ENCODE measurements at regions of chr17 and their contacts with region 1.

Region 1: GRCh38 chr17:50094753-50095619 is at the start of gene PDK2:
- DNase-seq: peak; percentile 95
- H3K4me3 Mint-ChIP-seq: peak within 1 kb of the TSS; percentile 82
- H3K27ac Mint-ChIP-seq: peak within 1 kb of the TSS; percentile 90
- H3K4me1 Mint-ChIP-seq: peaks cover 16% of the 10 kb centered on the region
- H3K27me3 Mint-ChIP-seq: no peaks in the 10 kb centered on the region
- total RNA-seq, gene PDK2: 10.5 to 11.1 TPM

Region 2: DNA sequence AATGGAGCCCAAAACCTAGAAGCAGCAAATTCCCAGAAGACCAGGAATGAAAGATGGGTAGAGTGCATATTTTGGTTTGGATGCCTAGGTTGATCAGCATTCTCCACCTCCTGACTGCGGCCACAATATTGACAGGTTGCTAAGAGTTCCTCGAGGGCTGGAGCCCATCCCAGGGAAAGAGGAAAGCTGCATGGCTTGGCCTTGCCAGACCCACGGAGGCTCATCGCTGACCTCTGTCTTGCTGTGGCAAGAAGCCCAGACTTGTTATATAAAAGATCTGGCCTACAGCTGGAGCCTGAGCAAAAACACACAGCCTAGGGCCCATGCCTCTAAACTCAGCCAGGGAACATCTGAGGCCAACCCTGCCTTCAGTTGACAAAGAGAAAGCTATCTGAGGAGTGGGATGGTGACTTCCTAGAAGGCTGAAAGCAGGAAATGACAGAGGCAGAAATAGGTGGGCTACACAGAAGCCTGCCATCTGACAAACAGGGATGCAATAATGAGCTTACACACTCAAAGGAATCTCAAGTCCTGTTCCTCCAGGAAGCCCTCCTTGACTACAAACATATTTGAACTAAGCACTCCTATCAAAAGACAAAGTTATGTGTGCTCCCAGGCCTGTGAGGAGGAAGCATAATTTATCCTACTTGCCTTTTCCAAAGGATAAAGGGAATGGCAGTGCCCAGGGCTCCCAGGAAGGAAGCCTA is 364.8 kb before region 1 on chr17:
- CTCF ChIA-PET with region 1: no interaction called
- intact Hi-C with region 1: no loop called
- DNase-seq: no peak
- H3K4me3 Mint-ChIP-seq: no peak overlapping the region
- H3K27ac Mint-ChIP-seq: no peak overlapping the region
- H3K4me1 Mint-ChIP-seq: peaks cover 51% of the 10 kb centered on the region
- H3K27me3 Mint-ChIP-seq: no peaks in the 10 kb centered on the region

Region 3: GRCh38 chr17:50045154-50045553 is 49.8 kb before region 1 on chr17:
- CTCF ChIA-PET with region 1: interaction called, 12 read pairs
- intact Hi-C with region 1: no loop called
- DNase-seq: no peak
- H3K4me3 Mint-ChIP-seq: no peak overlapping the region
- H3K27ac Mint-ChIP-seq: no peak overlapping the region
- H3K4me1 Mint-ChIP-seq: peaks cover 21% of the 10 kb centered on the region
- H3K27me3 Mint-ChIP-seq: peaks cover 2% of the 10 kb centered on the region

Region 4: DNA sequence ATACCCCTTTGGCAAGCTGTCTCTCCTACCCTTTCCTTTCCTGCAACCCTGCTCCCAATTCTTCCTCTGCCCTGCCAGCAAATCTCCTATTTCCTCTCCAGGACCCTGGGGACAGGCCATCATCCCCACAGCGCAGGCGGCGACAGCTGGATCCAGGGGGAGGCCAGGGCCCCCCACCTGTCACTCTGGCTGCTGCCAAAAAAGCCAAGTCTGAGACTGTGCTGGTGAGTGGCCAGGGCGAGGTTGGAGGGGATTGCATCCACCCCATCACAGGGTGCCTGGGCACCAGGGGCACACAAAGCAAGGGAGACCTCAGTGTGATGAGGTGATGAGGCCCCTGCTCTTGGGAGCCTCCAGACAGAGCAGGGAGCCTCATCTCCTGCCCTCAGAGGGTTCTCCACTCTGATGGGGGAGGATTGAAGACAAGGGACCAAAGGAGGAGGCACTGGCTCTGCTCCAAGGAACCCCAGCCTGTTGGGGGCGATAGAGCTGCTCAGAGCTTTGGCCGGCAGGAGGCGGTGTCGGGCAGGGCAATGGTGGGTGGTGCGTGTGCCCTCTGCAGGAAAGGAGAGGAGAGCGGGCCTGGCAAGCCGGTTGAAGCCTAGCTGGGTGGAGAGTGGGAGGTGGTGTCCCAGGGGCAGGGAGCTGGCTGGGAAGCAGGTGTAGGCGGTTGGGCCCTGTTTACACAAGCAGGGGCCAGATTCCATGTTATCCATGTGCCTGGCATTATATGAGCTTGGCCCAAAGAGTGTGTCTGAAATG is 15.5 kb before region 1 on chr17:
- CTCF ChIA-PET with region 1: interaction called, 15 read pairs
- intact Hi-C with region 1: no loop called
- DNase-seq: no peak
- H3K4me3 Mint-ChIP-seq: no peak overlapping the region
- H3K27ac Mint-ChIP-seq: no peak overlapping the region
- H3K4me1 Mint-ChIP-seq: no peaks in the 10 kb centered on the region
- H3K27me3 Mint-ChIP-seq: no peaks in the 10 kb centered on the region

Region 5: GRCh38 chr17:50114849-50115357 is 19.9 kb after region 1 on chr17:
- CTCF ChIA-PET with region 1: interaction called, 16 read pairs
- intact Hi-C with region 1: no loop called
- DNase-seq: peak; percentile 76
- H3K4me3 Mint-ChIP-seq: no peak overlapping the region
- H3K27ac Mint-ChIP-seq: no peak overlapping the region
- H3K4me1 Mint-ChIP-seq: peaks cover 7% of the 10 kb centered on the region
- H3K27me3 Mint-ChIP-seq: peaks cover 26% of the 10 kb centered on the region

Region 6: GRCh38 chr17:50151041-50151936 is 56.3 kb after region 1 on chr17:
- CTCF ChIA-PET with region 1: interaction called, 16 read pairs
- intact Hi-C with region 1: loop called (anchors 1 kb)
- DNase-seq: peak; percentile 94
- H3K4me3 Mint-ChIP-seq: peak overlapping the region; percentile 88
- H3K27ac Mint-ChIP-seq: peak overlapping the region; percentile 96
- H3K4me1 Mint-ChIP-seq: peaks cover 44% of the 10 kb centered on the region
- H3K27me3 Mint-ChIP-seq: no peaks in the 10 kb centered on the region

Region 7: DNA sequence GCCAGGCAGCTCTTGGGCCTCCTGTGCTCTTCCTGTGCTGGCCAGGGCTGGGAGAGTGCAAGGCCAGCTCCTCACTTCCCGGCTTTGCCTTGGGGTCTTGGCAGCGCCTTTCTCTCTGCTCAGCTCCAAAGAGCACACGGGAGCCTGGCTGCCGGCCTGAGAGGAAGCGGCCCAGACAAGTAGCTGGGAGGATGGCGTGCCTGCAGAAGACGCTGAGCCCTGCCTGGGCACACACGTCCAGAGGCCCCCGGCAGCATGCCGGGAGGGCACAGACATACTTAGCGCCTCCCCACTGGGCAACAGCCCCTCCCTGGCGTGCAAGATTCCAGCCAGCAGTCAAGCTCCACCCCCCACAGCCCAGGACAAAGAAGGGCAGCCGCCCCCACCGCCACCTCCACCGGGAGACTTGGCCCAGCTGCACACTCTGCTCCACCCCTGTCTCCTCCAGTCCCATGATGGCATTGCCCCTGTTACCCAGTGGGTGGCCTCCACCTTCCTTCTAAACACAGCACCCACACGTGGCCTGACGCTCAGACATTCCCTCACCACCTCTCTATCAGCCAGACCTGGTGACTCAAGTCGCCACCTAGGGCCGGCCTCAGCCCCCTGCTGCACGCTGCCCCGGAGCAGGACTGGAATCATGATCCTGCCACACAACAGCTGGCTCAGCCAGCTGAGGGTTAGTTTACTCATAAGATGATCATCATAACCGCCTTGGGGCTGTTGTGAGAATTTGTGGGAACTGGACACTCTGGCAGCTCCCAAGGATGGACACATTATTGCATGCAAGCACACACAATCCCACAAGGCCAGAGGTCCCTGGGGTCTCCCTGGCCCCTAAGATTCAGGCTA is 83.2 kb after region 1 on chr17:
- CTCF ChIA-PET with region 1: interaction called, 16 read pairs
- intact Hi-C with region 1: loop called (anchors 1 kb)
- DNase-seq: peak; percentile 73
- H3K4me3 Mint-ChIP-seq: peak overlapping the region; percentile 22
- H3K27ac Mint-ChIP-seq: no peak overlapping the region
- H3K4me1 Mint-ChIP-seq: peaks cover 15% of the 10 kb centered on the region
- H3K27me3 Mint-ChIP-seq: no peaks in the 10 kb centered on the region

Region 8: GRCh38 chr17:50297407-50297865 is 202.4 kb after region 1 on chr17:
- CTCF ChIA-PET with region 1: interaction called, 23 read pairs
- intact Hi-C with region 1: loop called (anchors 1 kb)
- DNase-seq: peak; percentile 89
- H3K4me3 Mint-ChIP-seq: no peak overlapping the region
- H3K27ac Mint-ChIP-seq: no peak overlapping the region
- H3K4me1 Mint-ChIP-seq: no peaks in the 10 kb centered on the region
- H3K27me3 Mint-ChIP-seq: peaks cover 3% of the 10 kb centered on the region

Measured in activated naive CD4-positive, alpha-beta T cell treated with anti-CD3 and anti-CD28 coated beads for 36 hours (primary cell).